Mammary epithelial cell (primary cell): ENCODE measurements at regions of chr12 and their contacts with region 1.

Region 1: GRCh38 chr12:116336542-116337065 is 59.1 kb upstream of the MED13L start:
- DNase-seq: no peak
- H3K4me3 ChIP-seq: no peak overlapping the region
- H3K27ac ChIP-seq: no peak overlapping the region
- H3K4me1 ChIP-seq: no peaks in the 10 kb centered on the region
- H3K27me3 ChIP-seq: no peaks in the 10 kb centered on the region
- CTCF ChIP-seq: no peak

Region 2: DNA sequence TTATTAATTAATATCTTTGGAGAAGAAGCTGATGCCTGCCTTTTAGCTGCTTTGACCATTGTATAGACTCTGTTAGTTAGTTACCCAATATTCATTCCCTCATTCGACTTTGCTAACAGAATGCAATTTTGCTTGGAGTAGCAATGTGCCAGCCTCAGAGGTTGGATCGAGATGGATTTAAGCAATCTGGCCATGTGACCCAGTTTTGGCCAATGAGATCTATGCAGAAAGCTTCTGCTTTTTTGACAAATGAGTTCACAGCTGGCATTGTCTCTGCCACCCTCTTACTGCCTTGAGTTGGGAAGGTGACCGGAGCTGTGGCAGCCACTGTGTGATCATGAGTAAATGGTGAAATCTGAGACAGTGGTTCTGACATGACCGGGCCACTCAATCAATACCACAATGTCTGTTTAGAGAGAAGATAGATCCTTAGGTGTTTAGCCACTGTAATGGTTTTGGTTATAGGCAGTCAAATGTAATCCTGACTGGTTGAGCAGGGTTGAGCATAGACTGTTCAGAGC is 15.8 kb after region 1 on chr12:
- CTCF ChIA-PET with region 1: no interaction called
- dilution Hi-C with region 1: no loop called
- in situ Hi-C with region 1: no loop called
- intact Hi-C with region 1: loop called (anchors 1 kb)
- DNase-seq: no peak
- H3K4me3 ChIP-seq: no peak overlapping the region
- H3K27ac ChIP-seq: no peak overlapping the region
- H3K4me1 ChIP-seq: no peaks in the 10 kb centered on the region
- H3K27me3 ChIP-seq: no peaks in the 10 kb centered on the region
- CTCF ChIP-seq: no peak

Region 3: GRCh38 chr12:116448164-116448739 is 111.6 kb after region 1 on chr12:
- CTCF ChIA-PET with region 1: no interaction called
- dilution Hi-C with region 1: loop called (anchors 5 kb)
- in situ Hi-C with region 1: no loop called
- intact Hi-C with region 1: no loop called
- DNase-seq: no peak
- H3K4me3 ChIP-seq: no peak overlapping the region
- H3K27ac ChIP-seq: no peak overlapping the region
- H3K4me1 ChIP-seq: peaks cover 10% of the 10 kb centered on the region
- H3K27me3 ChIP-seq: no peaks in the 10 kb centered on the region
- CTCF ChIP-seq: no peak